Endothelial cell of umbilical vein (primary cell): ENCODE measurements at regions of chr12 and their contacts with region 1.

Region 1: GRCh38 chr12:62731055-62731820 is 203.7 kb downstream of the PPM1H start:
- DNase-seq: peak; percentile 49
- H3K4me3 ChIP-seq: no peak overlapping the region
- H3K27ac ChIP-seq: peak overlapping the region; percentile 42
- H3K4me1 ChIP-seq: peaks cover 34% of the 10 kb centered on the region
- H3K27me3 ChIP-seq: no peaks in the 10 kb centered on the region
- CTCF ChIP-seq: no peak
- POLR2A ChIP-seq: no peak

Region 2: DNA sequence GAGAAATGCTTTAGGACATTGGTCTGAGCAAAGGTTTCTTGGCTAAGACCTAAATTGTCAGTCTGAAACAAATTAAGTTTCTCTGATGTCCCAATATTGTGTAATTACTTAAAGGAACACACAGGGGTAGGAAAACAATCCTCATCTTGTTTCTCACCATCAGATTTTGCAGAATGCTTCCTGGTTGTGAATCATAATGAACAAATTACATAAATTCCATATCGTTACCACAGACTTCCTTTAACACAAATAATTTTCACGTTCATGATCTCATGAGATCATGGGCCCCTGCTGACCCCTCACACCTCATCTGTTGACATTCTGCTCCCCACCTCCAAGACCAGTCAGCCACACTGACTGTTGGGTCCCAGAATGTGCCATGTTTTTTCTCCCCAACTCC is 70.5 kb before region 1 on chr12:
- CTCF ChIA-PET with region 1: no interaction called
- POLR2A ChIA-PET with region 1: no interaction called
- dilution Hi-C with region 1: no loop called
- intact Hi-C with region 1: loop called (anchors 5 kb)
- DNase-seq: peak; percentile 84
- H3K4me3 ChIP-seq: no peak overlapping the region
- H3K27ac ChIP-seq: peak overlapping the region; percentile 55
- H3K4me1 ChIP-seq: peaks cover 27% of the 10 kb centered on the region
- H3K27me3 ChIP-seq: no peaks in the 10 kb centered on the region
- CTCF ChIP-seq: no peak
- POLR2A ChIP-seq: no peak